ENCODE measurements at regions of chr13 and their contacts with region 1.

Region 1: GRCh38 chr13:51797664-51798488 is 6.1 kb downstream of the DHRS12 start:
- DNase-seq: peak; percentile 72 to 82 (median 77)
- H3K4me3 ChIP-seq: no peak overlapping the region
- H3K27ac ChIP-seq: no peak overlapping the region
- H3K4me1 ChIP-seq: peaks cover 19 to 78% (median 61%) of the 10 kb centered on the region in 4 experiments
- H3K27me3 ChIP-seq: no peaks in the 10 kb centered on the region

Region 2: GRCh38 chr13:51444922-51445321 is 353.0 kb before region 1 on chr13:
- CTCF ChIA-PET with region 1: interaction called, 140 read pairs
- POLR2A ChIA-PET with region 1: no interaction called
- DNase-seq: peak; percentile 60 to 71 (median 71)
- H3K4me3 ChIP-seq: no peak overlapping the region
- H3K27ac ChIP-seq: no peak overlapping the region
- H3K4me1 ChIP-seq: peaks cover 0 to 10% (median 4%) of the 10 kb centered on the region in 4 experiments
- H3K27me3 ChIP-seq: no peaks in the 10 kb centered on the region

Region 3: GRCh38 chr13:51583875-51584730 is 213.8 kb before region 1 on chr13 and contains the start of gene WDFY2:
- CTCF ChIA-PET with region 1: interaction called, 14 read pairs
- POLR2A ChIA-PET with region 1: no interaction called
- DNase-seq: peak; percentile 100
- H3K4me3 ChIP-seq: peak within 1 kb of the TSS; percentile 89 to 100 (median 98)
- H3K27ac ChIP-seq: peak within 1 kb of the TSS; percentile 78 to 86
- H3K4me1 ChIP-seq: peaks cover 17 to 35% (median 25%) of the 10 kb centered on the region in 4 experiments
- H3K27me3 ChIP-seq: no peaks in the 10 kb centered on the region

Region 4: DNA sequence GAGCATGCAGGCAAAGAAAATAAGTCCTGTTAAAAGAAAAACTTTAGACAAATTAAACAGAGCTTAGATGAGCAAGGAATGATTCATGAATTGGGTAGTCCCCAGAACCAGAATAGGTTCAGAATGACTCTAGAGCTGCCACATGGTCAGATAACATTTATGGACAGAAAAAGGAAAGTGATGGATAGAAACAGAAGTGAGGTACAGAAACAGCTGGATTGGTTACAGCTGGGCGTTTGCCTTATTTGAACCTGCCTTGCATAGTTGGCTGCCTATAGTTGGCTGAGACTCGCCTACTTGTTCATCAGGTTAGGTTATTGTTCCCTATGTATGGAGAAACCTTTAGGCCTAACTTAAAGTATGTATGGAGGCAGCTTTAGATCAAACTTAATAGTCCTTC is 178.3 kb before region 1 on chr13:
- CTCF ChIA-PET with region 1: no interaction called
- POLR2A ChIA-PET with region 1: no interaction called
- DNase-seq: no peak
- H3K4me3 ChIP-seq: no peak overlapping the region
- H3K27ac ChIP-seq: no peak overlapping the region
- H3K4me1 ChIP-seq: peaks cover 12 to 23% (median 18%) of the 10 kb centered on the region in 4 experiments
- H3K27me3 ChIP-seq: no peaks in the 10 kb centered on the region

Region 5: GRCh38 chr13:51764184-51765141 is 33.4 kb before region 1 on chr13:
- CTCF ChIA-PET with region 1: interaction called, 29 read pairs
- POLR2A ChIA-PET with region 1: interaction called, 3 read pairs
- DNase-seq: peak; percentile 18 to 82 (median 81)
- H3K4me3 ChIP-seq: peak overlapping the region in 5 of 7 experiments; percentile 13 to 60 (median 46)
- H3K27ac ChIP-seq: peak overlapping the region; percentile 41 to 45
- H3K4me1 ChIP-seq: peaks cover 0 to 17% (median 15%) of the 10 kb centered on the region in 4 experiments
- H3K27me3 ChIP-seq: no peaks in the 10 kb centered on the region

Region 6: DNA sequence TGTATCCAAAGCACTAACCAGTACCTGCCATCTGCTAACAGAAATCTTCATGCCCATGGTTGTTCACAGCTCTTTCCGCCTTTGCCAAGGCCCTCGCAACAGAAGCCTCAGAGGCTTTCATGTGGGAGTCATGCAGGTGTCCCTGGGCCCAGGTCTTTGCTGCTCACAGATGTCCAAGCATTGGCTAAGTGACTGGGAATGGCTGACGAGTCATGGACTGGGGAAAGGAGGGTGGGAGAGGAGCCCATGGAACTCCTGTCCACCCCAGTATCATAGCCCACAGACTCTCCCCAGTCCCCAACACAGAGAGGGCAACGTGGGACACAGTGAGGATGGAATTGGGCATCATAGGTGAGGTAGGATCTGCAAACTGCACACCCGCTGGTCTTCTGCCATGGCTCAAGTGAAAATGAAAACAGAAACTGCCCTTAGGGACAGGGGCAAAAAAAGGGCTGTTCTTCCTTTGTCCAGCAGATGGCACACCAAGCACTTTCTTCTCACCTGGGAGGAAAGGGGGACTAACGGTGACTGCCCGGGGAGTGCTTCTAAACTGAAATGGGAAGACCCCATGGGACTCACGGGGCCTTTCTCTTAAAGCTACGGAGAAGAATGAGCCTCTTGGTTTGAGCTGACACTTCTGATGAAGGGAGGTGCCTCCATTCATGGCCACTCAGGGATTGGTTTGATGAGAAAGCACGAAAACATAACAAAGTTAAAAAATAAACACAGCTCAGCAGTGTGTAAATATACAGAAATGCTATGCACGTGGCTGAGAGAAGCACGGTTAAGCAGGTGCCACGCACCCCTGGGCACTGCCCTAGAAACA is 17.2 kb after region 1 on chr13:
- CTCF ChIA-PET with region 1: interaction called, 17 read pairs
- POLR2A ChIA-PET with region 1: no interaction called
- DNase-seq: peak; percentile 72 to 89 (median 78)
- H3K4me3 ChIP-seq: peak overlapping the region in 4 of 7 experiments; percentile 2 to 63 (median 36)
- H3K27ac ChIP-seq: no peak overlapping the region
- H3K4me1 ChIP-seq: peaks cover 3 to 29% (median 25%) of the 10 kb centered on the region in 4 experiments
- H3K27me3 ChIP-seq: no peaks in the 10 kb centered on the region